Esophagus muscularis mucosa (tissue), 4 donors: ENCODE measurements at regions of chr3 and their contacts with region 1.

Region 1: GRCh38 chr3:197256836-197257444 is 41.5 kb downstream of the DLG1 start:
- DNase-seq: no peak
- H3K4me3 ChIP-seq: no peak overlapping the region
- H3K27ac ChIP-seq: no peak overlapping the region
- H3K4me1 ChIP-seq: peaks cover 12 to 34% (median 23%) of the 10 kb centered on the region in 4 donors
- H3K27me3 ChIP-seq: no peaks in the 10 kb centered on the region
- CTCF ChIP-seq: peak; percentile 68 to 85 (median 73)
- EP300 ChIP-seq: no peak
- POLR2A ChIP-seq: no peak

Region 2: GRCh38 chr3:197511130-197511529 is 254.2 kb after region 1 on chr3:
- intact Hi-C with region 1: loop called (anchors 2 kb)
- DNase-seq: no peak
- H3K4me3 ChIP-seq: no peak overlapping the region
- H3K27ac ChIP-seq: no peak overlapping the region
- H3K4me1 ChIP-seq: peaks cover 7 to 13% (median 12%) of the 10 kb centered on the region in 4 donors
- H3K27me3 ChIP-seq: no peaks in the 10 kb centered on the region
- CTCF ChIP-seq: no peak
- EP300 ChIP-seq: no peak
- POLR2A ChIP-seq: no peak

Region 3: DNA sequence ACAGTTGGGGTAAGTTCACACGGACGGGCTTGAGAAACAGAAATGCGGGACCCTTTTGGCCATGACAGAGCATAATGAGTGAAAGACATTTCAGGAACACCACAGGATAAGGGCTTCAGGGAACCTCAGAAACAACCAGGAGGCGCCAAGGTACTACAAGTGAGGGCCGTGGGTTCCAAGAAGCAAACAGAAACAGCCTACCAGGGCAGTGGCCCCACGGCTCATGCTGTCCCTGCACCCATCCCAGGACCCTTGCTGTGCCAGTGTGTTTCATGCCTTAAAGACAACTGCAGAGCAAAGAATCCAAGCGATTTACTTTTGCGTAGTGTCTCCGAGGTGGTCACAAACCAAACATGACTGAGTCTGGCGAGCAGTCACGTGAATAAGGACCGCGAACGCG is 425.8 kb after region 1 on chr3:
- intact Hi-C with region 1: no loop called
- DNase-seq: no peak
- H3K4me3 ChIP-seq: no peak overlapping the region
- H3K27ac ChIP-seq: no peak overlapping the region
- H3K4me1 ChIP-seq: no peaks in the 10 kb centered on the region
- H3K27me3 ChIP-seq: no peaks in the 10 kb centered on the region
- CTCF ChIP-seq: no peak
- EP300 ChIP-seq: no peak
- POLR2A ChIP-seq: no peak

Region 4: DNA sequence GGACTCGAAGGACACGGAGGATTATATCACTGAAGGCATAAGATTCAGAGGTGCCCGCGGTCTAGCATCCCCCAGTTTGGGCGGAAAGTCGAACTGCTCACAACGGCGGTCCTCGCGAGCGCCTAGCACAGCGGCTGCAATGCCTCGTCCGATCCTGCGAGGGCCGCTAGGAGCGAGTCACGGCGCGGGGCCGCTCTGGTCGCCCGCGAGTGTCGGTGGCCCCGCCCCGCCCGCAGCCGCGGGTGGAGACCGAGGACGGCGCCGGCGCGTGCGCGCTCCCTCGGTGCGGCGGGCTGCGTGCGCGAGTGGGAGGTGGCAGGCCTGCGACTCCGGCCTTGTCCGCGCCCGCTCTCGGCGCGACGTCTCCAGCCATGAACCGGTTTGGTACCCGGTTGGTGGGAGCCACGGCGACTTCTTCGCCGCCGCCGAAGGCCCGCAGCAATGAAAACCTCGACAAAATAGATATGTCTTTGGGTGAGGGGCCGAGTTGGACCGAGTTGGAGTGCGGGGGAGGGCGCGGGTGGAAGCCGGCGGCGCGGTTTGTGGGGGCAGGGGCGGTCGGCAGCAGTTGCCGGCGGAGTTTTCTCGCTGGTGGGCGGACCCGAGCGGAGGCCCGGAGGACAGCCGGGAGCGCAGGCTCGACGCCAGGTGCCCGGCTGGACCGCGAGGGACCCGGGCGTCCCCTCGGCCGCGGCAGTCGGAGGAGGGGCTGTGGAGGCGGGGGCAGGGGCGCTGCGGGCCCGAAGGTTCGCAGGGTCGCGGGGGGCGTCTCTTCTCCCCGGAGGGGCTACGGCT is 492.9 kb after region 1 on chr3 and contains the start of gene FYTTD1:
- intact Hi-C with region 1: no loop called
- DNase-seq: peak; percentile 96
- H3K4me3 ChIP-seq: peak within 1 kb of the TSS; percentile 84 to 93 (median 87)
- H3K27ac ChIP-seq: peak within 1 kb of the TSS; percentile 94 to 99 (median 96)
- H3K4me1 ChIP-seq: peaks cover 32 to 36% (median 35%) of the 10 kb centered on the region in 4 donors
- H3K27me3 ChIP-seq: no peaks in the 10 kb centered on the region
- CTCF ChIP-seq: peak; percentile 42 to 69 (median 56)
- EP300 ChIP-seq: no peak
- POLR2A ChIP-seq: peak; percentile 54
- total RNA-seq, gene FYTTD1: 57.7 to 111 (median 85.6) TPM